PC-9 (cell line): ENCODE measurements at regions of chr1 and their contacts with region 1.

Region 1: GRCh38 chr1:30929135-30929889 is 20.8 kb upstream of the SDC3 start:
- DNase-seq: peak in 1 of 2 experiments; percentile 37
- H3K4me3 ChIP-seq: no peak overlapping the region
- H3K27ac ChIP-seq: no peak overlapping the region
- H3K4me1 ChIP-seq: no peaks in the 10 kb centered on the region
- H3K27me3 ChIP-seq: no peaks in the 10 kb centered on the region
- CTCF ChIP-seq: peak; percentile 82

Region 2: DNA sequence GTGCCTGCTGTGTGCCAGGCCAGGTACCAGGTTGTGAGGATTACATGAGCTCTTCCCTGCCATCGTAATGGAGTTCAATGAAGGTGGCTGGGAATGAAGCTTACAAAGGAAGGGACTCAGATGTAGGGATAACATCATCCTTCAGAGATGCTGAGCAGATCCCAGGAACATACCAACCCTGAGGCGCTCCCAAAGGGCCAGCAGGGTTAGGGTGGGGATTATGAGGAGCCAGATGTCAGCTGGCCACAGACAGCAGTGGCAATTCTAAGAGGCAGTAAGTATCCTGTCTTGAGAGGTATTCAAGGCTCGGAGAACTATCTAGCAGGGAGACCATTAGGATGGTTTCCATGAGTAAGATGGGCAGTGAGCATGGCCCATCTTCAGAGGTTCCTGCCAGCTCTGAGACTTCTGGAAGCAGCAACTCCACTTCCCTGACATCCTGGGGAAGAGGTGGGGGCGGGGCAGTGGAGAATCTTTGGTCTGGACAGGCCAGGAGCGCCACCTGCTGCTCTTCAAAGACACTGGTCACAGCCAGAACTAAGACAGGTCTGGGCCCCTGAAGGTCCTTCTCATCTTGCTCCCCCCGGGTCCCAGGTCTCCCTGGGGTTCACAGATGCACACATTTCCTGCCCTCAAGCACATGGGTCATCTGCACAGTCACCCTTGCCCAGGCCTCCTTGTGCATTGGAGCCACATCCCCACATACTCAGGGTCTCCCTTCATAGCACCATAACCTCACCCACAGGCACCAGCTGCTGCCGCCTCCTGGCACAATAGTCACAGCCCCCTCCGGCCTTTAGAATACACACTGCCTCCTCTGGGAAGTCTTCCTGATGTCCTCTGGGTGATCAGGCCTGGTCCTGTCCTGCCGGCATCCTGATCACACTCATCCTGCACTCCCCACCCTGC is 18.0 kb before region 1 on chr1:
- CTCF ChIA-PET with region 1: interaction called, 12 read pairs
- POLR2A ChIA-PET with region 1: no interaction called
- intact Hi-C with region 1: no loop called
- DNase-seq: peak; percentile 41 to 74
- H3K4me3 ChIP-seq: no peak overlapping the region
- H3K27ac ChIP-seq: no peak overlapping the region
- H3K4me1 ChIP-seq: peaks cover 17% of the 10 kb centered on the region
- H3K27me3 ChIP-seq: no peaks in the 10 kb centered on the region
- CTCF ChIP-seq: peak; percentile 82